Breast epithelium (tissue), 4 donors: ENCODE measurements at regions of chr2 and their contacts with region 1.

Region 1: DNA sequence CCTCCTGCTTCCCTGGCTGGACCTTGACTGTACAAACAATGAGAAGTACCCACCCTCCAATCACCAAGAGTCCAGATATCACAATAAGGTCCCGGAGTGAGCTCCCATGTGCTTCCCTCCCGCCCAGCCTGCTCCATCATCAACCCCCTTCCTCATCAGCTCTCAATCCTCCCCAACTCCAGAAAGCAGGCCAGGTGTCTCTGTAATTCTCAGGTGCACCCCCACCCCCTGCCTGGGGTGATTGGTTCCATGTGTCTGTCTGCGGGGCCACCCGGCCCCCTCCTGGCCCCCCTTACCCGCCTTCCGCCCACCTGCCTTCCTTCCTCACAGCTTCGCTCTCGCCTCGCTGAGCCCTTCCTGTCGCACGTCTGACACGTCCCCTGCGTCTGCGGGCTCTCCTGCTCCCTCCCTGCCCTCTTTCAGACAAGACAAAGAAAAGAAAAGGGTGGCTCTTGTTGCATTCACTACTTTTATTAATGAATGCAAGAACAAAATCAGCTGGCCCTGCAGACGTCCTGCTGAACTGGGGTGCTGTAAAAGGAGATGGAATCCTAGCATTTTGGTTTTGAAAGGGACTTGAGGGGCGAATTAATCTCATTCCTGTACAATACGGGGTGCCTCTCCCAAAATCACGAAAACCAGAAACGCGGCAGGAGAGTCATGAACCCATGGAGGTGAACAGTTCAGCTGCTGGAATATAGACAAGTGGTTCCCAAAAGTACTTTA is 26.5 kb upstream of the IGFBP2 start:
- DNase-seq: no peak
- H3K4me3 ChIP-seq: peak overlapping the region in 1 of 3 donors; percentile 27
- H3K27ac ChIP-seq: no peak overlapping the region
- H3K4me1 ChIP-seq: no peaks in the 10 kb centered on the region
- H3K27me3 ChIP-seq: no peaks in the 10 kb centered on the region
- CTCF ChIP-seq: no peak
- POLR2A ChIP-seq: no peak

Region 2: DNA sequence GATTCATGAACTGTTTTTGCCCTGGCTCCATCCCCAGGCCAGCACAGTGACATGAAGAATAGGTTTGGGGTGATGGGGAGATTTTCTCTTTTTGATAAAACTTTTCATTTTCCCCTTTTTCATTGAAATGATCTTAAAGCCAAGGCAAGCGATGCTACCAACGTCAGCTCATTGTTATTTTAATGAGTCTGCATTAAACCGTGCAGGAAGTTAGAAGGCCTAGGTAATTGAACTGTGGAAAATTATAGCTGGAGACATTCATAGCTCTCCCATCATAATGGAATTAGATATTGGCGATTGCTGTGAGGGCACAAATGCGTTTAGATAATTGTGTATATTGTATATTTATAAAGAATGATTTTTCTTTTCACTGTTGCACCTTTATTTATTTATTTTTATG is 161.2 kb before region 1 on chr2:
- intact Hi-C with region 1: loop called (anchors 5 kb)
- DNase-seq: no peak
- H3K4me3 ChIP-seq: no peak overlapping the region
- H3K27ac ChIP-seq: no peak overlapping the region
- H3K4me1 ChIP-seq: no peaks in the 10 kb centered on the region
- H3K27me3 ChIP-seq: no peaks in the 10 kb centered on the region
- CTCF ChIP-seq: no peak
- POLR2A ChIP-seq: no peak